SK-N-SH (cell line): ENCODE measurements at regions of chr22 and their contacts with region 1.

Region 1: GRCh38 chr22:17742527-17742902 is 31.8 kb downstream of the BID start:
- DNase-seq: peak; percentile 93
- H3K4me3 ChIP-seq: no peak overlapping the region
- H3K27ac ChIP-seq: no peak overlapping the region
- H3K4me1 ChIP-seq: peaks cover 0 to 2% of the 10 kb centered on the region in 2 experiments; a peak in 1 of 4 replicates
- H3K27me3 ChIP-seq: no peaks in the 10 kb centered on the region
- CTCF ChIP-seq: peak; percentile 76
- EP300 ChIP-seq: no peak
- RAD21 ChIP-seq: peak; percentile 86

Region 2: GRCh38 chr22:17655289-17655688 is 87.2 kb before region 1 on chr22:
- CTCF ChIA-PET with region 1: no interaction called
- POLR2A ChIA-PET with region 1: no interaction called
- DNase-seq: no peak
- H3K4me3 ChIP-seq: no peak overlapping the region
- H3K27ac ChIP-seq: no peak overlapping the region
- H3K4me1 ChIP-seq: no peaks in the 10 kb centered on the region
- H3K27me3 ChIP-seq: no peaks in the 10 kb centered on the region
- CTCF ChIP-seq: no peak
- EP300 ChIP-seq: no peak
- RAD21 ChIP-seq: no peak

Region 3: GRCh38 chr22:17726464-17727246 is 15.9 kb before region 1 on chr22:
- CTCF ChIA-PET with region 1: interaction called, 31 read pairs
- POLR2A ChIA-PET with region 1: no interaction called
- DNase-seq: no peak
- H3K4me3 ChIP-seq: no peak overlapping the region
- H3K27ac ChIP-seq: peak overlapping the region in 1 of 2 experiments; percentile 65; a peak in 2 of 4 replicates
- H3K4me1 ChIP-seq: peaks cover 9 to 20% of the 10 kb centered on the region in 2 experiments; a peak in 3 of 4 replicates
- H3K27me3 ChIP-seq: no peaks in the 10 kb centered on the region
- CTCF ChIP-seq: no peak
- EP300 ChIP-seq: no peak
- RAD21 ChIP-seq: no peak

Region 4: GRCh38 chr22:17754233-17754925 is 11.9 kb after region 1 on chr22:
- CTCF ChIA-PET with region 1: interaction called, 24 read pairs
- POLR2A ChIA-PET with region 1: no interaction called
- DNase-seq: no peak
- H3K4me3 ChIP-seq: no peak overlapping the region
- H3K27ac ChIP-seq: no peak overlapping the region
- H3K4me1 ChIP-seq: no peaks in the 10 kb centered on the region
- H3K27me3 ChIP-seq: no peaks in the 10 kb centered on the region
- CTCF ChIP-seq: peak; percentile 27; the same call in 1 of the 2 replicates
- EP300 ChIP-seq: no peak
- RAD21 ChIP-seq: peak; percentile 43

Region 5: GRCh38 chr22:17773606-17774205 is 31.2 kb after region 1 on chr22:
- CTCF ChIA-PET with region 1: interaction called, 62 read pairs
- POLR2A ChIA-PET with region 1: interaction called, 5 read pairs
- DNase-seq: peak; percentile 93
- H3K4me3 ChIP-seq: peak overlapping the region; percentile 73 to 81
- H3K27ac ChIP-seq: peak overlapping the region in 1 of 2 experiments; percentile 79; a peak in 2 of 4 replicates
- H3K4me1 ChIP-seq: peaks cover 12 to 35% of the 10 kb centered on the region in 2 experiments; a peak in 2 of 4 replicates
- H3K27me3 ChIP-seq: no peaks in the 10 kb centered on the region
- CTCF ChIP-seq: no peak
- EP300 ChIP-seq: no peak
- RAD21 ChIP-seq: no peak

Region 6: GRCh38 chr22:17785185-17786184 is 43.0 kb after region 1 on chr22:
- CTCF ChIA-PET with region 1: interaction called, 17 read pairs
- POLR2A ChIA-PET with region 1: no interaction called
- DNase-seq: no peak
- H3K4me3 ChIP-seq: no peak overlapping the region; a peak in 1 of 4 replicates
- H3K27ac ChIP-seq: no peak overlapping the region
- H3K4me1 ChIP-seq: peaks cover 12 to 25% of the 10 kb centered on the region in 2 experiments; a peak in 3 of 4 replicates
- H3K27me3 ChIP-seq: no peaks in the 10 kb centered on the region
- CTCF ChIP-seq: peak; percentile 43
- EP300 ChIP-seq: no peak
- RAD21 ChIP-seq: peak; percentile 11; the same call in 1 of the 2 replicates